ENCODE measurements at regions of chrX and their contacts with region 1.

Region 1: GRCh38 chrX:118847676-118848075 is 24.1 kb downstream of the ZCCHC12 start:
- DNase-seq: no peak
- ATAC-seq: peak; percentile 73 to 90 (median 82)
- H3K4me3 ChIP-seq: no peak overlapping the region
- H3K27ac ChIP-seq: no peak overlapping the region
- H3K4me1 ChIP-seq: no peaks in the 10 kb centered on the region
- H3K27me3 ChIP-seq: no peaks in the 10 kb centered on the region
- CTCF ChIP-seq: peak; percentile 73 to 80 (median 77)
- POLR2A ChIP-seq: no peak

Region 2: GRCh38 chrX:118795528-118796280 is 52.0 kb before region 1 on chrX:
- intact Hi-C with region 1: no loop called
- DNase-seq: no peak
- ATAC-seq: no peak
- H3K4me3 ChIP-seq: no peak overlapping the region
- H3K27ac ChIP-seq: no peak overlapping the region
- H3K4me1 ChIP-seq: no peaks in the 10 kb centered on the region
- H3K27me3 ChIP-seq: no peaks in the 10 kb centered on the region
- CTCF ChIP-seq: no peak
- POLR2A ChIP-seq: no peak

Region 3: GRCh38 chrX:118974088-118974907 is 126.6 kb after region 1 on chrX and contains the start of gene LONRF3:
- intact Hi-C with region 1: loop called in 1 of 2 experiments (anchors 10 kb)
- DNase-seq: peak; percentile 81 to 86 (median 84)
- ATAC-seq: peak; percentile 58 to 67 (median 64)
- H3K4me3 ChIP-seq: peak within 1 kb of the TSS; percentile 47 to 64 (median 62)
- H3K27ac ChIP-seq: peak within 1 kb of the TSS; percentile 83 to 91 (median 85)
- H3K4me1 ChIP-seq: peaks cover 0 to 8% (median 0%) of the 10 kb centered on the region in 4 donors
- H3K27me3 ChIP-seq: no peaks in the 10 kb centered on the region
- CTCF ChIP-seq: no peak
- POLR2A ChIP-seq: peak; percentile 94
- total RNA-seq, gene LONRF3: 6.2 to 13.5 (median 9.4) TPM